ENCODE measurements at regions of chr14 and their contacts with region 1.

Region 1: GRCh38 chr14:71586131-71586897 is 345.9 kb upstream of the RGS6 start:
- DNase-seq: no peak
- ATAC-seq: no peak
- H3K4me3 ChIP-seq: no peak overlapping the region
- H3K27ac ChIP-seq: no peak overlapping the region
- H3K4me1 ChIP-seq: peaks cover 19% of the 10 kb centered on the region
- H3K27me3 ChIP-seq: no peaks in the 10 kb centered on the region
- CTCF ChIP-seq: no peak

Region 2: GRCh38 chr14:70919774-70920173 is 666.5 kb before region 1 on chr14:
- CTCF ChIA-PET with region 1: no interaction called
- POLR2A ChIA-PET with region 1: interaction called, 13 read pairs
- intact Hi-C with region 1: no loop called
- DNase-seq: peak; percentile 19
- ATAC-seq: peak; percentile 16
- H3K4me3 ChIP-seq: no peak overlapping the region
- H3K27ac ChIP-seq: no peak overlapping the region
- H3K4me1 ChIP-seq: peaks cover 34% of the 10 kb centered on the region
- H3K27me3 ChIP-seq: no peaks in the 10 kb centered on the region
- CTCF ChIP-seq: no peak

Measured in PC-3 (cell line).